ENCODE measurements at regions of chr5 and their contacts with region 1.

Region 1: GRCh38 chr5:164504141-164504772 is 998.8 kb downstream of the MAT2B start:
- DNase-seq: peak; percentile 81
- H3K4me3 Mint-ChIP-seq: no peak overlapping the region
- H3K27ac Mint-ChIP-seq: peak overlapping the region; percentile 61
- H3K4me1 Mint-ChIP-seq: peaks cover 10% of the 10 kb centered on the region
- H3K27me3 Mint-ChIP-seq: no peaks in the 10 kb centered on the region
- CTCF ChIP-seq: peak; percentile 95

Region 2: DNA sequence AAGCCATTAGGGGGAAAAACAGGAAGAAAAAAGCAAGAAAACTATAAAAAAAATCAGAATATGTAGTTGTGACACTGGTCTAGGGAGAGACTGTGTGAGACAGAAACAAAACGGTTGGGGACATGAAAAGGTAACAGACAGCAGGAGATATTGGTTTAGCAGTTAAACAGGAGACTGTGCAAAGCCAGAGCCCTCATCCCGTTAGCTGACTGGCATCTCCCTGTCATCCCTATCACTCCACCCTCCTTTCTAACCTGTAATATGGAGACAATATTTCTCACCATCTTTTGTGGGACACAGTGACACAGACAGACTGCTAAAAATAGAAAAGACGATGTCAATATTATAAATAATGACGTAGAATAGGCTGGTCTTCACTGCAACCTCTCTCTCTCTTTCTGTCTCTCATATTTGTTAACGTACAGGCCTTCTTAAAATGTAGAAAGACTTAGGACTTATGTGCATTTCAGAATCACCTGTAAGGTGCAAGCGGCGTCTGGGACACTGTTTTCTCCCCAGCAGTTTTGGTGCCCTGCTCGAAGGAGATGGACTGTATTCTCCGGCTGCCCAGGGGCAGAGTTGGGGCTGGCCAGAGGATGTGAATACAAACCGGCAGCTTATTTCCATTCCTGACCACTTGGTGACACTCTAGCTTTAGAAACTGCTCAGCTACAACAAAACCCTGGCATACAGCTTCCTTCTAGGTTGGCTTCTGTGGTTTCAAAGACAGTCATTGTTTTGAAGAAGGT is 808.3 kb before region 1 on chr5:
- CTCF ChIA-PET with region 1: interaction called, 50 read pairs
- POLR2A ChIA-PET with region 1: interaction called, 6 read pairs
- intact Hi-C with region 1: loop called (anchors 1 kb)
- DNase-seq: peak; percentile 90
- H3K4me3 Mint-ChIP-seq: no peak overlapping the region
- H3K27ac Mint-ChIP-seq: no peak overlapping the region
- H3K4me1 Mint-ChIP-seq: peaks cover 8% of the 10 kb centered on the region
- H3K27me3 Mint-ChIP-seq: no peaks in the 10 kb centered on the region
- CTCF ChIP-seq: peak; percentile 98

Region 3: GRCh38 chr5:164041105-164041504 is 463.2 kb before region 1 on chr5:
- CTCF ChIA-PET with region 1: interaction called, 10 read pairs
- POLR2A ChIA-PET with region 1: no interaction called
- intact Hi-C with region 1: no loop called
- DNase-seq: no peak
- H3K4me3 Mint-ChIP-seq: no peak overlapping the region
- H3K27ac Mint-ChIP-seq: no peak overlapping the region
- H3K4me1 Mint-ChIP-seq: no peaks in the 10 kb centered on the region
- H3K27me3 Mint-ChIP-seq: no peaks in the 10 kb centered on the region
- CTCF ChIP-seq: no peak

Region 4: DNA sequence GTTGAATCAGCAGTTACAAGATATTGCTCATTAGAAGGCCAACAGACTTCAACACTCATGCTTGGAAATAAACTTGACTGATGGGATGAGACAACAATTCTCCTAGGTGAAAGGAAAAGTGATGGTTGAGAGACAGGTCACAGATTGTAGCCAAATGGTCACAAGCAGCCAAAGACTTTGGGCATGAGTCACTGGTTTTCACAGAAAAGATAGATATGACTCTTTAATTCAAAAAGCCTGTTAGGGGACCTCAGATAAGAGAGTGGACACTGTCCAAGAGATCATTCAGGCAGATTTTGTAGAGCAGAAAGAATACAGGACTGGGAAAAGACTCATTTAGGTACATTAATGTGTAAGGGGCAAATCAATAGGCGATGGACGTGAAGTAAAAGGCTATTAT is 16.3 kb before region 1 on chr5:
- CTCF ChIA-PET with region 1: interaction called, 15 read pairs
- POLR2A ChIA-PET with region 1: interaction called, 3 read pairs
- intact Hi-C with region 1: no loop called
- DNase-seq: no peak
- H3K4me3 Mint-ChIP-seq: no peak overlapping the region
- H3K27ac Mint-ChIP-seq: no peak overlapping the region
- H3K4me1 Mint-ChIP-seq: no peaks in the 10 kb centered on the region
- H3K27me3 Mint-ChIP-seq: no peaks in the 10 kb centered on the region
- CTCF ChIP-seq: no peak

Region 5: GRCh38 chr5:164672931-164673694 is 168.9 kb after region 1 on chr5:
- CTCF ChIA-PET with region 1: interaction called, 69 read pairs
- POLR2A ChIA-PET with region 1: no interaction called
- intact Hi-C with region 1: loop called (anchors 1 kb)
- DNase-seq: peak; percentile 42
- H3K4me3 Mint-ChIP-seq: no peak overlapping the region
- H3K27ac Mint-ChIP-seq: no peak overlapping the region
- H3K4me1 Mint-ChIP-seq: no peaks in the 10 kb centered on the region
- H3K27me3 Mint-ChIP-seq: no peaks in the 10 kb centered on the region
- CTCF ChIP-seq: peak; percentile 54

Region 6: GRCh38 chr5:165066751-165067385 is 562.6 kb after region 1 on chr5:
- CTCF ChIA-PET with region 1: no interaction called
- POLR2A ChIA-PET with region 1: no interaction called
- intact Hi-C with region 1: no loop called
- DNase-seq: no peak
- H3K4me3 Mint-ChIP-seq: no peak overlapping the region
- H3K27ac Mint-ChIP-seq: no peak overlapping the region
- H3K4me1 Mint-ChIP-seq: no peaks in the 10 kb centered on the region
- H3K27me3 Mint-ChIP-seq: no peaks in the 10 kb centered on the region
- CTCF ChIP-seq: no peak

Measured in MCF 10A (cell line).